ENCODE measurements at regions of chr7 and their contacts with region 1.

Region 1: GRCh38 chr7:102272075-102272917 is 14.4 kb upstream of the SH2B2 start:
- DNase-seq: peak; percentile 76
- ATAC-seq: peak; percentile 92
- H3K4me3 ChIP-seq: no peak overlapping the region
- H3K27ac ChIP-seq: no peak overlapping the region
- H3K4me1 ChIP-seq: no peaks in the 10 kb centered on the region
- H3K27me3 ChIP-seq: no peaks in the 10 kb centered on the region
- CTCF ChIP-seq: peak; percentile 94

Region 2: GRCh38 chr7:101542527-101543241 is 729.6 kb before region 1 on chr7:
- CTCF ChIA-PET with region 1: interaction called, 5 read pairs
- POLR2A ChIA-PET with region 1: no interaction called
- intact Hi-C with region 1: loop called (anchors 1 kb)
- DNase-seq: peak; percentile 75
- ATAC-seq: peak; percentile 62
- H3K4me3 ChIP-seq: no peak overlapping the region
- H3K27ac ChIP-seq: no peak overlapping the region
- H3K4me1 ChIP-seq: no peaks in the 10 kb centered on the region
- H3K27me3 ChIP-seq: no peaks in the 10 kb centered on the region
- CTCF ChIP-seq: peak; percentile 88

Region 3: GRCh38 chr7:101602484-101603241 is 669.6 kb before region 1 on chr7:
- CTCF ChIA-PET with region 1: no interaction called
- POLR2A ChIA-PET with region 1: no interaction called
- intact Hi-C with region 1: loop called (anchors 5 kb)
- DNase-seq: peak; percentile 82
- ATAC-seq: peak; percentile 99
- H3K4me3 ChIP-seq: no peak overlapping the region
- H3K27ac ChIP-seq: no peak overlapping the region
- H3K4me1 ChIP-seq: no peaks in the 10 kb centered on the region
- H3K27me3 ChIP-seq: no peaks in the 10 kb centered on the region
- CTCF ChIP-seq: peak; percentile 90

Region 4: DNA sequence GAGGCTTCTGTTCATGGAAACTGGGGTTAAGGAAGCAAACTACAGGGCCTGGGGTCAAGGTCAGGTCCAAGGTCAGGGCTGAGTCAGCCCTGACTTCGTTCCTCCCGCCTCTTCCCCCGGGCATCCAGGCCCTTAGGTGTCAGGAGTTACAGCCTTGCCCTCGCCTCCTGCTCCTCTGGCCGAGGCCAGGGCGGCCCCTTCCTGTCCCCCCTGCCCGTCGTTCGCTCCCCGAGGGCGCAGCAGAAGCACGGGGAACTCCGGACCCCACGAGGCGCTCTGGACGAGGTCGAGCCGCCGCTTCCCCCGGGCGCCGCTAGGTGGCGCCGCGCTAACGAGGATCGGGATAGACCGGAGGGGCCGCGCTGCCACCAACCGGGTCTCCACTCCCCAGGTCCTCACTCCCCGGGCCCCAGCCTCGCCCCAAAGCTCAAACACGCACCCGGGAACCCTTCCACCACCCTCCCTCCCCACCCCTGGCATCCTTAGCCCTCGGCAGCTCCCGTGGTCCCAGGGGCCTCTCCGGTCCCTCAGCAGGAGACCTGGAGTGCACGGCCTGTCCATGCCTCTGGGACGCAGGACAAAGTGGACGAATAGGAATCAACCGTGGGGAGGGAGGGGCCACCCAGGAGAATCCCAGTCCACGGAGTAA is 584.0 kb before region 1 on chr7:
- CTCF ChIA-PET with region 1: no interaction called
- POLR2A ChIA-PET with region 1: no interaction called
- intact Hi-C with region 1: loop called (anchors 2 kb)
- DNase-seq: peak; percentile 70
- ATAC-seq: peak; percentile 94
- H3K4me3 ChIP-seq: peak overlapping the region; percentile 40
- H3K27ac ChIP-seq: no peak overlapping the region
- H3K4me1 ChIP-seq: no peaks in the 10 kb centered on the region
- H3K27me3 ChIP-seq: no peaks in the 10 kb centered on the region
- CTCF ChIP-seq: peak; percentile 82

Region 5: DNA sequence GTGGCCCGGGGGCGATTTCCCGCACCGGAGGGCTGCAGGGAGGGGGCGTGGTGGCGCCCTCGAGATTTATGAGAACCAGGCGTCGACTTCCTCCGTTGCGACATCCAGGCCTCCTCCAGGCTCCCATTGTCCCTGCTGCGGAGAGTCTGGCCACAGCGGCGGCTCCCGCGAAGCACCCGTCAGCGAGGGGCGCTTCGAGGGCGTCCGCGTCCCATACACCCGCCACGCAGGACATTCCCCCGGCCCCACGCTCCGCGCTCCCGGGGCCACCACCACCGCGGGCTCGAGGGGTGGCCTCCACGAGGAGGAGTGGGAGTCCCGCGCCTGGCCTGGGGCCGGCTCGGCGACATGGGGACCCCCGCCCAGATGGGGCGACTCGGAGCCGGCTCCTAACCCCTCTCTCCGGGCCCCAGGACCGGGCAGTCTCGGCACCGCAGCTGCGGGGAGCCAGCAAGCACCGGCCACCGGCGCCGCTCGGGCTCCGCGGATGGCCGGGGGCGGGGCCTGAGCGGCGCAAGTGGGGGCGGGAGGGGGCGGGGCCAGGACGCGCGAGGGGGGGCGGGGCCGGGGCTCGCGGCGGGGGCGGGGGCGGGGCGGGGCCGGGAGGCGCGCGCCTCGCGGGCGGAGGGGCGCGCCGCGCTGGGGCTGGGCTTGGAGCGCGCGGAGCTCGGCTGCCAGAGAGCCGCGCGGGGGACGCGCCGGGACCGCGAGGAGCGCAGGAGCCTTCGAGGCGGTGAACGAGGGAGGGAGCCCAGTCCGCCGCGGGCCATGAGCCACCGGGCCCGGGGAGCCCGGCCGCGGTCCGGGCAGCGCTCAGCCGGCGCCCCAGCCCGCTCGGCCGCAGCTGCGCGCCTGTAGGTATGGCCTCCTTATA is 14.2 kb after region 1 on chr7 and contains the start of gene SH2B2:
- CTCF ChIA-PET with region 1: no interaction called
- POLR2A ChIA-PET with region 1: no interaction called
- intact Hi-C with region 1: no loop called
- DNase-seq: peak; percentile 49
- ATAC-seq: peak; percentile 55
- H3K4me3 ChIP-seq: peak within 1 kb of the TSS; percentile 84
- H3K27ac ChIP-seq: no peak within 1 kb of the TSS
- H3K4me1 ChIP-seq: peaks cover 11% of the 10 kb centered on the region
- H3K27me3 ChIP-seq: no peaks in the 10 kb centered on the region
- CTCF ChIP-seq: no peak
- total RNA-seq, gene SH2B2: 8.8 and 10.7 TPM in 2 replicates